ENCODE measurements at regions of chr15 and their contacts with region 1.

Region 1: DNA sequence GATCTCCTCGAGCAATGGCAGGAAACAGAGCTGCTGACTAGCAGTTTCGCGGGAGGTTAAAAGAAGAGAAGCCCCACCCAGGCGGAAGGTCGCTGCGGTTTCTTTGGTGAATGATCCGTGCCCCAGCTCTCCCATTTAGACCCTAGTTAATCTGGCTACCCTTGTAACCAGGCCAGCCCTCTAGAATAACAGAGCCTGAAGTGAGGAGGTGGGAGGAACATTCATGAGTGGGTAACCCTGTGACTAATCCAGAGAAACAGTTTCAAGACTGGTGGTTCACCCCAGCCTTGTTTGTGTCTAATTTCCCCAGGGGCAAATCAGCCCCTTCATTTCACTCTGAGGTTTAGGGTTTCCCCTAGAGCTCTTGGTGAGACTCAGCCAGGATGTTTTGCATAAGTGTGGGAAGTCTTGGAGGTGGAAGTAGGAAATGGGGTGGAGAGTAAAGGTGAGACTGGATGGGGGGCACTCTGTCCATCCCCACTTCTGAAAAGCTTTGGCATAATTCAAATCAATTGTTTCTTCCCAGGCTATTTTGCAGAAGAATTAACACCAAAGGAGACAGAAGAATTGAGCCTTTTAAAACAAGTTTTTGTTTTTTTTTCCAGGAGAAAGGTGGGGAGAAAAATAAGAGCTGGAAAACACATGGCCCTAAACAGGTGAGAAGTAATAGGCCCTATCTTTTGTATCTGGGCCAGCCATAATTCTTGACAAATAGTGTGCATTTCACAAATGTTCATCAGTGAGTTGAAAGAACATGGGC is 303.1 kb downstream of the RPLP1 start:
- DNase-seq: peak; percentile 91
- ATAC-seq: peak; percentile 67
- H3K4me3 Mint-ChIP-seq: peak overlapping the region; percentile 40
- H3K27ac Mint-ChIP-seq: peak overlapping the region; percentile 93
- H3K4me1 Mint-ChIP-seq: peaks cover 94% of the 10 kb centered on the region
- H3K27me3 Mint-ChIP-seq: peaks cover 9% of the 10 kb centered on the region

Region 2: DNA sequence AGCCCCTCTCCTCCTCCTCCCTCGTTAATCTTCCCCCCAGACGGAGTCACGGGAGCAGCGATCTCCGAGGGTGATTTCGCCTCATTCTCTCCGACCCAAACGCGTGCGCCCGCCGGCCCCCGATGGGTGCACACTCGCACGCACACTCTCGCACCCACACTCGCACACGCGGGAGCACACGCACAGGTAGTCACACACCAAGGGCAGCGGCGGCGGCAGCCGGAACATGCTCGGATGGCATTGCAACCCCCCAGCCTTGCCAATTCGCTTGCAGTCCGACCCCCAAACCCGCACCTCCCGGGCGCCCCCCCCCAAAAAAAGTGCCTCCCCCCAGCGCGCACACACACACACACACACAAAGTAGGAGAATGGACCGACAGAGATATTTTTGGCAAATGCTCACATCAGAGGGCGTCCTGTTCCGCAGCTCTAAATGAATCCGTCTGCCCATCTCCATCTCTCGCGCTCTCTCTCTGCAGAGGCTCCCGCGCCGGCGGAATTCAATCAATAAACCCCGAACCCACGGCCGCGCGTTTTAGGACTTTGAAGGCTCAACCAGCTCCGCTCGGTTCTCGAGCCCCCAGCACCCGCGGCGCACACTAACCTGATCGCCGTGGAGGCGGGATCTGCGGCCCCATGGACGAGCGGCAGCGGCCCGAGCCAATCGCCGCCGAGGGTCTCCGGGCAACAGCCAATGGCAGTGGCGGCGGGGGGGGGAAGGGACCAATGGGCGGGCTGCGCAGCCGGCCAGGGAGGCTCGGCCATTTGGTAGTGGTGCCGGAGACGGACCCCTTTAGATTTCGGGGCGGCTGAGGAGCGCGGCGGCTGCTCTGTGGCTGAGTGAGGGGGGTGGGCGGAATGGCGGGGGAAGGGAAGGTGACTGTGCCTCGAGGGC is 935.2 kb before region 1 on chr15 and contains the start of gene ANP32A:
- CTCF ChIA-PET with region 1: no interaction called
- POLR2A ChIA-PET with region 1: no interaction called
- intact Hi-C with region 1: loop called in 1 of 2 experiments (anchors 10 kb)
- DNase-seq: peak; percentile 98
- ATAC-seq: peak; percentile 76
- H3K4me3 Mint-ChIP-seq: peak within 1 kb of the TSS; percentile 99
- H3K27ac Mint-ChIP-seq: peak within 1 kb of the TSS; percentile 98
- H3K4me1 Mint-ChIP-seq: peaks cover 26% of the 10 kb centered on the region
- H3K27me3 Mint-ChIP-seq: no peaks in the 10 kb centered on the region
- total RNA-seq, gene ANP32A: 252 to 439 TPM

Region 3: GRCh38 chr15:69468241-69469121 is 287.2 kb before region 1 on chr15:
- CTCF ChIA-PET with region 1: interaction called, 3 read pairs
- POLR2A ChIA-PET with region 1: interaction called, 3 read pairs
- intact Hi-C with region 1: loop called (anchors 1 to 2 kb)
- DNase-seq: peak; percentile 91
- ATAC-seq: peak; percentile 94
- H3K4me3 Mint-ChIP-seq: peak overlapping the region; percentile 59
- H3K27ac Mint-ChIP-seq: peak overlapping the region; percentile 85
- H3K4me1 Mint-ChIP-seq: peaks cover 27% of the 10 kb centered on the region
- H3K27me3 Mint-ChIP-seq: no peaks in the 10 kb centered on the region

Region 4: GRCh38 chr15:69665641-69666111 is 90.1 kb before region 1 on chr15:
- CTCF ChIA-PET with region 1: no interaction called
- POLR2A ChIA-PET with region 1: no interaction called
- intact Hi-C with region 1: no loop called
- DNase-seq: no peak
- ATAC-seq: no peak
- H3K4me3 Mint-ChIP-seq: no peak overlapping the region
- H3K27ac Mint-ChIP-seq: peak overlapping the region; percentile 80
- H3K4me1 Mint-ChIP-seq: peaks cover 29% of the 10 kb centered on the region
- H3K27me3 Mint-ChIP-seq: no peaks in the 10 kb centered on the region

Region 5: DNA sequence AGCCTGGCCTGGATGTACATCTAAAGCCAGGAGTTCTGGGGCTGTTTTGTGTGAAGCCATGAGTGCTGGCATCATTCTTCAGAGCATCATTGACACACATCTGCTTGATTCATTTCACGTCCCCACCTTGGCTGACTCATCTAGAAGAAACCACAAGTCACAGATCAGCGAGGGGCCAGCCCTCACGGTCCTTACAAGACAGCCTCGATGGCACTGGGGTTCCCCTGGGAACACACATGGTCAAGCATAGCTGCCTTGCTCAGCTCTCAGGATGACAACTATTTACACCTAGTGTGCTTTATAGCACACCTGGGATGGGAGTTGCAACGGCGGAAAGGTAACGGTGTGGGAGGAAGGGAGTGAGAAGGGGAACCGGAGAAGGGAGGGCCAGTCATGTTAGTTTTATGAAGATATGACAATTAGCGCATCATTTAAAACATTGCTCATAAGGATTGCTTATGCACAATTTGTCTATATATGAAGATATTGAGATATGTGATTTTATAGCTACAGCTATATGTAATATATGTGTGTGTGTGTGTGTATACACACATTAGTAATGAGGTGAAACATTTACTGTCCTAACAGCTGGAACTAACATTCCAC is 76.0 kb before region 1 on chr15:
- CTCF ChIA-PET with region 1: no interaction called
- POLR2A ChIA-PET with region 1: interaction called, 3 read pairs
- intact Hi-C with region 1: loop called in 1 of 2 experiments (anchors 2 kb)
- DNase-seq: peak; percentile 81
- ATAC-seq: peak; percentile 95
- H3K4me3 Mint-ChIP-seq: no peak overlapping the region
- H3K27ac Mint-ChIP-seq: peak overlapping the region; percentile 73
- H3K4me1 Mint-ChIP-seq: peaks cover 26% of the 10 kb centered on the region
- H3K27me3 Mint-ChIP-seq: peaks cover 10% of the 10 kb centered on the region

Region 6: GRCh38 chr15:69881766-69882165 is 126.0 kb after region 1 on chr15:
- CTCF ChIA-PET with region 1: no interaction called
- POLR2A ChIA-PET with region 1: no interaction called
- intact Hi-C with region 1: no loop called
- DNase-seq: no peak
- ATAC-seq: no peak
- H3K4me3 Mint-ChIP-seq: no peak overlapping the region
- H3K27ac Mint-ChIP-seq: no peak overlapping the region
- H3K4me1 Mint-ChIP-seq: peaks cover 6% of the 10 kb centered on the region
- H3K27me3 Mint-ChIP-seq: no peaks in the 10 kb centered on the region

Region 7: GRCh38 chr15:70023064-70023768 is 267.5 kb after region 1 on chr15:
- CTCF ChIA-PET with region 1: no interaction called
- POLR2A ChIA-PET with region 1: no interaction called
- intact Hi-C with region 1: loop called in 1 of 2 experiments (anchors 2 kb)
- DNase-seq: peak; percentile 62
- ATAC-seq: peak; percentile 100
- H3K4me3 Mint-ChIP-seq: no peak overlapping the region
- H3K27ac Mint-ChIP-seq: no peak overlapping the region
- H3K4me1 Mint-ChIP-seq: peaks cover 15% of the 10 kb centered on the region
- H3K27me3 Mint-ChIP-seq: no peaks in the 10 kb centered on the region

Region 8: DNA sequence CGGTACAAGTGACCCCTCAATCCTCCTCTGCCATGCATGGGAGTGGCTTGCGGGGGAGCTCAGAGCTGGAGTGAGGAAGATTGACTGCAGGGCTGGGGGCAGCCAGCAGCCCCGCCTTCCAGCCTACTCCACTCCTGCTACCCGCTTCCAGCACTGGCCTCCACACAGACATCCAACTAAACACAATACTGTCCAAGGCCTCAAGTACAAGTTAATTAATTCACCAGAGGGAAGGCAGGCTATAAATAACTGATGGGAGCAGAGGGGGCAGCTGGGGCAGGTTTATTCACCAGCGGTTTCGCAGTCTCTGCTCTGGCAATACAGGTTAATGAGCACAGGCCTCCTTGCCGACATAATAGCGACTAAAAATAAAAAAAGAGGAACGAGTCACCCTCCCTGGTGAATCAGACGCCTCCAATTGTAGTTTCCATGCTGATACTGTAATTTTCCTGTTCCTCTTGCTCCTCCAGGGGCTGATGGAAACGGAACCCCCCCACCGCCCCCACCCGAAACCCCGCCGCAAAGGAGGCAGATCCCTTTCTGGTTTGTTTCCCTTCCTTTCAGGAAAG is 508.4 kb after region 1 on chr15:
- CTCF ChIA-PET with region 1: no interaction called
- POLR2A ChIA-PET with region 1: no interaction called
- intact Hi-C with region 1: loop called (anchors 5 to 10 kb)
- DNase-seq: no peak
- ATAC-seq: no peak
- H3K4me3 Mint-ChIP-seq: no peak overlapping the region
- H3K27ac Mint-ChIP-seq: no peak overlapping the region
- H3K4me1 Mint-ChIP-seq: peaks cover 43% of the 10 kb centered on the region
- H3K27me3 Mint-ChIP-seq: peaks cover 10% of the 10 kb centered on the region

Region 9: DNA sequence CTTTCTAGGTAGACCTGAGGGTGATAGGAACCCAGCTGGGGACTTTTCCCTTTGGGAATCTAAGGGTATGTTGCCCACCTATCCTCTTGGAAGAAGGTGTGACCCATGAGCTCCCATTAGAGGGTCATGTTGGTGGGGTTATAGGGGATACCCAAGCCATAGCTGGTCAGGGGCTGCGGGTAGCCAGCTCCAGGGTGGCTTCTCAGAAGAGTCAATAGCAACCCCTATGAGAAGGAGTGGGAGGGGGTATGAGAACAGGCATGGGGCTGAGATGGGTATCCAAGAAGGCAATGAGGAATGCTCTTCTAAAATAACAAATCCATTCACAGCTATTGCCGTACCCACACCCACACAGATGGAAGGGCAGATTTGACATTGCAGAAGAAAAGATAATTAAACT is 789.8 kb after region 1 on chr15:
- CTCF ChIA-PET with region 1: no interaction called
- POLR2A ChIA-PET with region 1: interaction called, 10 read pairs
- intact Hi-C with region 1: loop called in 1 of 2 experiments (anchors 2 kb)
- DNase-seq: no peak
- ATAC-seq: no peak
- H3K4me3 Mint-ChIP-seq: no peak overlapping the region
- H3K27ac Mint-ChIP-seq: peak overlapping the region; percentile 84
- H3K4me1 Mint-ChIP-seq: peaks cover 51% of the 10 kb centered on the region
- H3K27me3 Mint-ChIP-seq: no peaks in the 10 kb centered on the region